GM23248 (cell line): ENCODE measurements at regions of chr11 and their contacts with region 1.

Region 1: GRCh38 chr11:130448416-130449309 is at the start of gene ADAMTS15:
- DNase-seq: peak; percentile 83
- H3K4me3 ChIP-seq: peak within 1 kb of the TSS; percentile 82
- H3K27ac ChIP-seq: no peak within 1 kb of the TSS
- H3K4me1 ChIP-seq: peaks cover 6% of the 10 kb centered on the region; the same call in 1 of the 2 replicates
- H3K27me3 ChIP-seq: no peaks in the 10 kb centered on the region
- total RNA-seq, gene ADAMTS15: 0.97 and 1.3 TPM in 2 replicates

Region 2: DNA sequence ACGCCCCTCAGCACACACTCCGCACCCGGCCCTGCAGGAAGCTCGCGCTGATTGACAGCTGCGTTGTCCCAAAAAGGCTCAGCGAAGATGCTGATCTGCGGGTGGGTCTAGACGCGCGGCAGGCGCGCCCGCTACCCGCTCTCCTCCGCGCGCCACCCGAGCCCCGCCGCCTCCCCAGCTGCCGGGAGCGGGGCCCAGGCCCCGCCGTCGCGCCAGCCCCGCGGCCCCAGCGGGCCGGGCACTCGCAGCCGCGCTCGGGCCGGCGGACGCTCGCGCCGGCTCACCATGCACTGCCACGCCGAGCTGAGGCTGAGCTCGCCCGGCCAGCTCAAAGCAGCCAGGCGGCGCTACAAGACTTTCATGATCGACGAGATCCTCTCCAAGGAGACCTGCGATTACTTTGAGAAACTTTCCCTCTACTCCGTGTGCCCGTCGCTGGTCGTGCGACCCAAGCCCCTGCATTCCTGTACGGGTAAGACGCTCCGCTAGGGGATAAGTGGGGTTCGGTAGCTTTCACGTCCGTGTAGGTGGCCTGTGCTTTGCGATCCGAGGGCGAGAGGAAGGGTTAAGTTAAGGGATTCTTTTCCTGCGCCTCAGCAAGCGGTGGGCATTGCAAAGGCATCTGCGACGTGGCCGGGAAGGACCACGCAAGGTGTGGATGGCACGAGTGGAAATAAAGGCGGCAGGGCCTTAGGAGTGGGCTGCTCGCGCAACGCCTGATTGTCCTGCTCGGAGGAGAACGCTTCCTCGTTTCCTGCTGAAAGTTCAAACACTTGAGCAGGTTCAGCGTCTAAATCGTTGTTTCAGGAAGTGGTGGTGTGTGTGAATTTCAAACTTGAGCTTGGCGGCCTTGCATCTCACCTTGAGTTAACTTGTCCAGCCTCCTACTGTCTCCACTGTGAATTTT is 1072.7 kb before region 1 on chr11 and contains the start of gene BARX2:
- in situ Hi-C with region 1: no loop called
- DNase-seq: peak; percentile 86
- H3K4me3 ChIP-seq: peak within 1 kb of the TSS; percentile 31; the same call in 1 of the 2 replicates
- H3K27ac ChIP-seq: no peak within 1 kb of the TSS
- H3K4me1 ChIP-seq: 0 out of 2 replicates have a peak, but pooled peaks cover 9% of the 10 kb centered on the region
- H3K27me3 ChIP-seq: peaks cover 94% of the 10 kb centered on the region
- total RNA-seq, gene BARX2: not detected in 2 replicates

Region 3: GRCh38 chr11:130002846-130003716 is 445.6 kb before region 1 on chr11:
- in situ Hi-C with region 1: no loop called
- DNase-seq: peak; percentile 99
- H3K4me3 ChIP-seq: peak overlapping the region; percentile 79
- H3K27ac ChIP-seq: peak overlapping the region; percentile 99
- H3K4me1 ChIP-seq: peaks cover 13% of the 10 kb centered on the region
- H3K27me3 ChIP-seq: no peaks in the 10 kb centered on the region

Region 4: DNA sequence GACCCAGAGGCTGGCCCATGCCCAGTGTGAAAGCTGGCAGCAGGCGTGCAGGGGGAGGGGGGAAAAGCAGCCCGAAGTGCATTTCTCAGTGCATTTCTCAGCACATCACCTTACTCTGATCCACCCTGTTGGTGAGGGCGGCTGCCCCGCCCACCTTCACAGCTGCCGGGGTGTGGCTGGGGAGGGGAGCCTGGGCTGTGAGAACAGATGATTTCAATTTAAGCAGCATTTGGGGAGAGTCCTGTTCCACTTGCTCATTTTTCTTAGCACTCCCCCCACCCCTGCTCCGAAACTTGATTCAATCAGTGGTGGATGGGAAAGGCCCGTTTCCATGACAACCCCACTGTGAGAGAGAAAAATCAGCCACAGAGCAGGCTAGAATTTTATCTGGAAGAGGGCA is 382.8 kb after region 1 on chr11:
- in situ Hi-C with region 1: loop called (anchors 10 kb)
- DNase-seq: no peak
- H3K4me3 ChIP-seq: no peak overlapping the region
- H3K27ac ChIP-seq: no peak overlapping the region
- H3K4me1 ChIP-seq: peaks cover 24% of the 10 kb centered on the region
- H3K27me3 ChIP-seq: no peaks in the 10 kb centered on the region